ENCODE measurements at regions of chr12 and their contacts with region 1.

Region 1: DNA sequence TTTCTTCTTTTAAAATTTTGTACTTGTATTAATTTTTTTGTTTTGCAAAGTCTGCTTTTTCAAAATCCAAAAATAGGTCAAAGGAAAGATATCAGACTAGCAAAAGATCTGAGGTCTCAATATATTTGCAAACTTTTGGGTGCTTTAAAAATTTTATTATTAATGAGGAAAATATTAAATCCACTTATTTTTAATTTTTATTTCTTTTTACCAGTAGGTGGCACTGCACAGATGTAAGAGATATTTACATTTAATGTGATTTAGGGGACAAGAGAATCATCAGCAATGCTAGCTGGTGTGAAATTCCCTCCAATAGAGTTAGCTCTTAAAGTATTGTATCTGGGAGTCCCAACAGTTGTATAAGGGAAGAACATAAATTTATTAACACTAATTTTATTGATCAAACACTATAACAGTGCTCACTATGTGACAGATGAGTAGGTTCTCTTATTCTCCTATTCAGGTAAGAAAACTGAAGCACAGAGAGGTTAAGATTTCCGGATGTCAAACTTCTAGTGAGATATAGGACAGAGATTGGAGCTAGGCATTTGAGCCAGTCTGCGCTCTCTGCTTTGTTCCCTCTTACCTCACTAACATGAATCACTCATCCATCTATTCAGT is 30.5 kb downstream of the ALX1 start:
- DNase-seq: no peak
- H3K4me3 ChIP-seq: no peak overlapping the region
- H3K27ac ChIP-seq: no peak overlapping the region
- H3K4me1 ChIP-seq: no peaks in the 10 kb centered on the region
- H3K27me3 ChIP-seq: no peaks in the 10 kb centered on the region
- CTCF ChIP-seq: no peak; a peak in 1 of 4 replicates
- EP300 ChIP-seq: no peak
- POLR2A ChIP-seq: no peak
- RAD21 ChIP-seq: no peak; a peak in 1 of 4 replicates

Region 2: GRCh38 chr12:85299053-85299452 is 11.5 kb before region 1 on chr12:
- CTCF ChIA-PET with region 1: interaction called, 16 read pairs
- POLR2A ChIA-PET with region 1: no interaction called
- DNase-seq: no peak
- H3K4me3 ChIP-seq: no peak overlapping the region
- H3K27ac ChIP-seq: no peak overlapping the region
- H3K4me1 ChIP-seq: no peaks in the 10 kb centered on the region
- H3K27me3 ChIP-seq: no peaks in the 10 kb centered on the region
- CTCF ChIP-seq: no peak
- EP300 ChIP-seq: no peak
- POLR2A ChIP-seq: no peak
- RAD21 ChIP-seq: no peak

Region 3: DNA sequence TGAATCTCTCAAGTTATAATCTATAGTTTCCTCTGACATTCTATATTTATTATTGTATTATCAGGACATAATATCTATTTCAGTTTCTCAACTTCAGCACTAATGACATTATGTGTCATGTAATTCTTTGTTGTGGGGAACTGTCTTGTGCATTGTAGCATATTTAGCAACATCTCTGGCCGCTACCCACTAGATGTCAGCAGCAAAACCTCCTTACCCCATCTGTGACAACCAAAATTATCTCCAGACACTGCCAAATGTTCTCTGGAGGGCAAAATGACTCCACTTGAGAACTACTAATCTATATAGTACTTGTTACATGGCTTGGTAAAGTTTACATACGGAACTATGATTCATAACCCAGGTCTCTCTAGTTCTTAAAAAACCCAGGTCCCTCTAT is 415.4 kb after region 1 on chr12:
- CTCF ChIA-PET with region 1: no interaction called
- POLR2A ChIA-PET with region 1: no interaction called
- DNase-seq: no peak
- H3K4me3 ChIP-seq: no peak overlapping the region
- H3K27ac ChIP-seq: no peak overlapping the region
- H3K4me1 ChIP-seq: no peaks in the 10 kb centered on the region
- H3K27me3 ChIP-seq: peaks cover 0 to 1% (median 0%) of the 10 kb centered on the region in 4 experiments; a peak in 1 of 7 replicates
- CTCF ChIP-seq: 0 out of 4 replicates have a peak, but pooled peaks of 1 of the 3 experiments have one; percentile 17
- EP300 ChIP-seq: no peak
- POLR2A ChIP-seq: no peak
- RAD21 ChIP-seq: peak; percentile 14 to 45; a peak in 2 of 4 replicates

Measured in H1 (cell line).